ENCODE measurements at regions of chr11 and their contacts with region 1.

Region 1: GRCh38 chr11:3888876-3889275 is 33.4 kb downstream of the STIM1 start:
- DNase-seq: no peak
- H3K27ac ChIP-seq: no peak overlapping the region
- CTCF ChIP-seq: no peak

Region 2: GRCh38 chr11:3939211-3939610 is 50.3 kb after region 1 on chr11:
- CTCF ChIA-PET with region 1: interaction called, 10 read pairs
- POLR2A ChIA-PET with region 1: no interaction called
- DNase-seq: no peak
- H3K27ac ChIP-seq: no peak overlapping the region
- CTCF ChIP-seq: no peak

Region 3: GRCh38 chr11:4818182-4818581 is 929.3 kb after region 1 on chr11:
- CTCF ChIA-PET with region 1: no interaction called
- POLR2A ChIA-PET with region 1: no interaction called
- DNase-seq: no peak
- H3K27ac ChIP-seq: no peak overlapping the region
- CTCF ChIP-seq: no peak

Measured in RWPE1 (cell line).